ENCODE measurements at regions of chr6 and their contacts with region 1.

Region 1: GRCh38 chr6:52361945-52362442 is at the start of gene PAQR8:
- DNase-seq: no peak
- H3K4me3 ChIP-seq: peak within 1 kb of the TSS; percentile 84 to 100 (median 89)
- H3K27ac ChIP-seq: peak within 1 kb of the TSS; percentile 82 to 88 (median 86)
- H3K4me1 ChIP-seq: peaks cover 16 to 71% (median 70%) of the 10 kb centered on the region in 4 donors
- H3K27me3 ChIP-seq: no peaks in the 10 kb centered on the region
- CTCF ChIP-seq: peak in 2 of 3 experiments; percentile 2 to 20
- EP300 ChIP-seq: no peak
- POLR2A ChIP-seq: no peak
- total RNA-seq, gene PAQR8: 11.1 to 32.5 (median 14.2) TPM

Region 2: GRCh38 chr6:52399511-52400312 is 37.7 kb after region 1 on chr6:
- intact Hi-C with region 1: loop called (anchors 5 kb)
- DNase-seq: no peak
- H3K4me3 ChIP-seq: no peak overlapping the region
- H3K27ac ChIP-seq: no peak overlapping the region
- H3K4me1 ChIP-seq: peaks cover 0 to 15% (median 5%) of the 10 kb centered on the region in 4 donors
- H3K27me3 ChIP-seq: no peaks in the 10 kb centered on the region
- CTCF ChIP-seq: peak; percentile 73 to 93 (median 81)
- EP300 ChIP-seq: no peak
- POLR2A ChIP-seq: no peak

Region 3: GRCh38 chr6:52410991-52411390 is 49.0 kb after region 1 on chr6:
- intact Hi-C with region 1: loop called (anchors 5 kb)
- DNase-seq: no peak
- H3K4me3 ChIP-seq: no peak overlapping the region
- H3K27ac ChIP-seq: peak overlapping the region in 1 of 4 donors; percentile 48
- H3K4me1 ChIP-seq: peaks cover 0 to 21% (median 17%) of the 10 kb centered on the region in 4 donors
- H3K27me3 ChIP-seq: no peaks in the 10 kb centered on the region
- CTCF ChIP-seq: no peak
- EP300 ChIP-seq: no peak
- POLR2A ChIP-seq: no peak